ENCODE measurements at regions of chr12 and their contacts with region 1.

Region 1: DNA sequence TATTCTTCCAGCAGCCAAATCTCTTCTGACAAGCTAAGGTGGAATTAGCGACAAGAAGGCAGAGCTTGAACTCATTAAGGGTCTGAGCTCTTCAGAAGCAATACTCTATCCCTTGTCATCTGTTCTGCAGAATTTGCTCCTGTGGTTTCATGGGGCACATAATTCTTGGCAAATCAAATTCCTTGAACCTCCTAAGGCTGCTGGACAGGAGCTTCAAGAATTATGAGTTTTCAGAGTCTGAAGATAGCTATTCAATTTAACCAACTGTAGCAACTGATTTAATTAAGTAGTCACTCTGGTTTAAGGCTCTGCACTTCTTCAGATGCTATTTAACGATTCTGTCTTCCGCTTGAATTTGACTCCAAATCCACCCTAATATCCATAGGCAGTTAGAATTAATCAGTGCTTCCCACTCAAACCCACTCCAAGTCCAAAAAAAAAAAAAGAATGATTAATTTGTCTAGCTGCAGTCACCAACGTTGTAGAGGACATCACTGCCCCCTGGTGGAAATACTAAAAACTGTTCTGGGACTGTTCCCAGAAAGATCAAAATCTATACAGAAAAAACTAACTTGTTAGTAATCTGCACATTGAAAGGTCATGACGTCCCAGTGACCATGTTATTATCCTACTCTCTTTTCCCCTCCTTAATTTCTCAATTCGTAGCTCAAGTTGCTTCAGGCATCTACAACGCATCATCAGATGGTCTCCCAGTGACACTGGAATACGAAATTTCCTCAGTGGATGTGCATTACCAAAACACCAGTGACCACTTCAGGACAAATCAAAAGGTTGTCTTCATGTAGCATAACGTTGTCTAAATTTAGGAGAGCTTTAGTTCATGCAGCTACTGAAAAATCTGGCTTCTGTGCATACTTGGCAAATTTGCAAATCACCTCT is 169.8 kb downstream of the KIF21A start:
- DNase-seq: peak; percentile 38
- H3K4me3 Mint-ChIP-seq: no peak overlapping the region
- H3K27ac Mint-ChIP-seq: no peak overlapping the region
- H3K4me1 Mint-ChIP-seq: peaks cover 6% of the 10 kb centered on the region
- H3K27me3 Mint-ChIP-seq: peaks cover 10% of the 10 kb centered on the region

Region 2: GRCh38 chr12:38332814-38333213 is 940.3 kb before region 1 on chr12:
- CTCF ChIA-PET with region 1: interaction called, 3 read pairs
- intact Hi-C with region 1: loop called (anchors 1 kb)
- DNase-seq: no peak
- H3K4me3 Mint-ChIP-seq: no peak overlapping the region
- H3K27ac Mint-ChIP-seq: no peak overlapping the region
- H3K4me1 Mint-ChIP-seq: no peaks in the 10 kb centered on the region
- H3K27me3 Mint-ChIP-seq: no peaks in the 10 kb centered on the region

Region 3: GRCh38 chr12:38906482-38907170 is 366.5 kb before region 1 on chr12:
- CTCF ChIA-PET with region 1: interaction called, 3 read pairs
- intact Hi-C with region 1: loop called (anchors 1 kb)
- DNase-seq: peak; percentile 76
- H3K4me3 Mint-ChIP-seq: peak overlapping the region; percentile 83
- H3K27ac Mint-ChIP-seq: peak overlapping the region; percentile 86
- H3K4me1 Mint-ChIP-seq: peaks cover 22% of the 10 kb centered on the region
- H3K27me3 Mint-ChIP-seq: peaks cover 31% of the 10 kb centered on the region

Region 4: DNA sequence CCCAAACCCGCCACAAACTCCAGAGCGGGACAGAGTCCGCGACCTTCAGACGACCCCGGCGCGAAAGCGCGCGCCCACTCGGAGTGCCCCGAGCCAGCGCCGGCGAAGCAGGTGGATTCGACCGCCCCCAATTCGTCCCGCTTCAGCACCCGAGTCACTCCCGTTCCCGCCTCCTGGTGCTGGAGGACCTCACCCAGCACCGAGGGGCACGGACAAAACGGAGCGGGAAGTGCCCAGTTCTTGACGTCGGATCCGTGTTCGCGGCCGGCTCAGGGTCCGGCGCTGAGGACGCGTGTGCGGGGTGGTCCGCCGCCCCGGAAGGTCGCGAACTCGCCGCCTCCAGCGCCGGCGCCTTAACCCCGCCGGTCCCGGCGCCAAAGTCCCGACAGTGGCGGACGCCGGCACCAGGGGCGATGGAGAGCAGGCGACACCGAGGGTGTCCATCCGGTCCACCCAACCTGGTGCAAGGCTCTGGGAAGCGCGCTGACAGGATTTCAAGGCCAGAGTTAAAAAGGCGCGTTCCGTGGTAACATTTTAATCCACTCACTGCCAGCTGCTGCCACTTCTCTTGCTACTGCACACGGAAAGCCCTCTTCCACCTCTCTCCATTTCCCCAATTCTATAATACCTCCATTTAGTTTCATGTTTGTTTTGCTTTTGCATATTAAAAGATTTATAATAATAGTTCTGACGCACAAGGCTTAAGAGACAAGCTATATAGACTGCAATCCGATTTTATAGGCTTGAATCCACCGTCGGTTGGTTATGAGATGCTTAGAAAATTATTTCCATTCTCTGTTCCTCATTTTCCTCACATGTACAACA is 127.7 kb before region 1 on chr12:
- CTCF ChIA-PET with region 1: interaction called, 6 read pairs
- intact Hi-C with region 1: loop called (anchors 2 kb)
- DNase-seq: peak; percentile 49
- H3K4me3 Mint-ChIP-seq: no peak overlapping the region
- H3K27ac Mint-ChIP-seq: no peak overlapping the region
- H3K4me1 Mint-ChIP-seq: no peaks in the 10 kb centered on the region
- H3K27me3 Mint-ChIP-seq: peaks cover 21% of the 10 kb centered on the region

Region 5: DNA sequence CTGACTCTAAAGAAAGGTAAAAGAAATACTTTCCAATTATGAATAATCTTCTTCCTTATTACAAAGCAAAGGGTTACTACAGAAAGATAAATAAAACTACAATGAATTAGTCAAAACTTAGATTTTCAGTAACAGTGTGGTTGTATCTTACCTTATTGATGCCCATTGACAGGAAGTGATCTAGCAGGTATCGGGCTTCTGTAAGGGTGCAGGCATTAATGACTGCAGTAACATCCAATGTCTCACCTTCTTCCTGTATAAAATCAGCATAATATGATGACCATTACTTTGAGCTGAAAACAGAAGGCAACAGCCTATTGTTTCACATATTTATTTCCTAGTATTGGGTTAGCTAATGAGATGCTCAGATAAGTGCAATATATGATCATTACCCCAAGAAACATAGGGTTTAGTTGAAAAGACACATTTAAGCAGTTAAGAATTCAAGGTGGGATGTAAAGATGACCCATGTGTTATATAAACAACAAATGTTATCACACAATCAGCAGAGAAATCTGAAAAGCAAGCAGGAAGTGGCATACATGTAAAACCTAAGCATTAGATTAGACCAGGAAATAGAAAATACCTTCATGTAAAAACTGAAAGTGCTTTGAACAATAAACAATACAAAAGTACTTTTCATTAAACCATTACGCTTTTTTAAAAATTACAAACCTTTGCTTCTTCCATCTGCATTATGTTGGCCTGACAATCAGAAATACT is 58.6 kb after region 1 on chr12:
- CTCF ChIA-PET with region 1: no interaction called
- intact Hi-C with region 1: no loop called
- DNase-seq: no peak
- H3K4me3 Mint-ChIP-seq: no peak overlapping the region
- H3K27ac Mint-ChIP-seq: no peak overlapping the region
- H3K4me1 Mint-ChIP-seq: peaks cover 12% of the 10 kb centered on the region
- H3K27me3 Mint-ChIP-seq: no peaks in the 10 kb centered on the region